BJ (cell line): ENCODE measurements at regions of chrX and their contacts with region 1.

Region 1: GRCh38 chrX:77640702-77641101 is 145.3 kb downstream of the ATRX start:
- DNase-seq: no peak
- H3K4me3 ChIP-seq: no peak overlapping the region
- H3K27me3 ChIP-seq: no peaks in the 10 kb centered on the region
- CTCF ChIP-seq: no peak

Region 2: GRCh38 chrX:77505227-77505626 is 135.5 kb before region 1 on chrX:
- CTCF ChIA-PET with region 1: no interaction called
- POLR2A ChIA-PET with region 1: no interaction called
- DNase-seq: no peak
- H3K4me3 ChIP-seq: no peak overlapping the region
- H3K27me3 ChIP-seq: no peaks in the 10 kb centered on the region
- CTCF ChIP-seq: no peak

Region 3: GRCh38 chrX:77527233-77528001 is 113.3 kb before region 1 on chrX:
- CTCF ChIA-PET with region 1: no interaction called
- POLR2A ChIA-PET with region 1: no interaction called
- DNase-seq: no peak
- H3K4me3 ChIP-seq: no peak overlapping the region
- H3K27me3 ChIP-seq: no peaks in the 10 kb centered on the region
- CTCF ChIP-seq: no peak

Region 4: DNA sequence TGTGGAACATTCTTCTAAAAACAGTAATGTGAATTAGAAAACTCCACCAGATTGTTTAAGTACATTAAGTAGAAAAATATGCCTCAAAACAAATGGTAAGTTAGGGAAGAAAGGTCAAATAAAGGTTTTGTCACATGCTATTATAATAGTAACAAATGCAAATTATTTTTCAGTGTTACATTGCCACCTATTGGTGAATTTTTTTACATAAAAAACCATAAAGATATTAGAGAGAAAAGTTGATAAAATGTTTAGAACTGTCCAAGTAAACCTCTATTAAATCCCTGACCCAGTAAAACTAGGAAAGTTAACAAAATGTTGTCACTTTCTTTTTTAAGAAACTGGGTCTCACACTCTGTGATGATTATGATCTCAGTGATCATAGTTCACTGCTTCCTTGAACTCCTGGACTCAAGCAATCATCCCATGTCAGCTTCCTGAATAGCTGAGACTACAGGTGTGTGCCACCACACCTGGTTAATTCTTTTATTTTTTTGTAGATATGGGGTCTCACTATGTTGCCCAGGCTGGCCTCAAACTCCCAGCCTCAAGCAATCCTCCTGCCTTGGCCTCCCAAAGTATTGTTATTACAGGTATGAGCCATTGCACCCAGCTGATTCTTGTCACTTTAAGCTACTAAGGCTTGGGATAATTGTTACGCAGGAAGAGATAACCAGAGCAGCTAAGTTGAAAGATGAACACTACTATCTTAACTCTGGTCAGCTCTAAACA is 12.2 kb before region 1 on chrX:
- CTCF ChIA-PET with region 1: no interaction called
- POLR2A ChIA-PET with region 1: interaction called, 11 read pairs
- DNase-seq: no peak
- H3K4me3 ChIP-seq: no peak overlapping the region
- H3K27me3 ChIP-seq: no peaks in the 10 kb centered on the region
- CTCF ChIP-seq: no peak

Region 5: GRCh38 chrX:77658886-77659285 is 18.2 kb after region 1 on chrX:
- CTCF ChIA-PET with region 1: no interaction called
- POLR2A ChIA-PET with region 1: no interaction called
- DNase-seq: no peak
- H3K4me3 ChIP-seq: no peak overlapping the region
- H3K27me3 ChIP-seq: no peaks in the 10 kb centered on the region
- CTCF ChIP-seq: no peak